ENCODE measurements at regions of chr14 and their contacts with region 1.

Region 1: DNA sequence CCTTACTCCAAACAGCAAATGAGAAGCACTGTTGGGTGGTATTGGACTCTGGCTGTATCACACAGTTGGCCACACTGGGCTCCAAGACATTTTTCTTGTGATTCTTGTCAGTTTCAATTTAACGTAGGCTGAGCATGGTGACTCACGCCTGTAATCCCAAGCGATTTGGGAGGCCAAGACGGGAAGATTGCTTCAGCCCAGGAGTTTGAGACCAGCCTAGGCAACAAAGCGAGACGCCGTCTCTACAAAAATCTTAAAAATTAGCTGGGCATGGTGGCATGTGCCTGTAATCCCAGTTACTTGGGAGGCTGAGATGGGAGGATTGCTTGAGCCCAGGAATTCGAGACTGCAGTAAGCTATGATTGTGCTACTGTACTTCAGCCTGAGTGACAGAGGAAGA is 35.3 kb upstream of the PLEKHD1 start:
- DNase-seq: no peak
- H3K4me3 ChIP-seq: no peak overlapping the region
- H3K27ac ChIP-seq: no peak overlapping the region
- H3K4me1 ChIP-seq: no peaks in the 10 kb centered on the region
- H3K27me3 ChIP-seq: no peaks in the 10 kb centered on the region
- CTCF ChIP-seq: no peak

Region 2: DNA sequence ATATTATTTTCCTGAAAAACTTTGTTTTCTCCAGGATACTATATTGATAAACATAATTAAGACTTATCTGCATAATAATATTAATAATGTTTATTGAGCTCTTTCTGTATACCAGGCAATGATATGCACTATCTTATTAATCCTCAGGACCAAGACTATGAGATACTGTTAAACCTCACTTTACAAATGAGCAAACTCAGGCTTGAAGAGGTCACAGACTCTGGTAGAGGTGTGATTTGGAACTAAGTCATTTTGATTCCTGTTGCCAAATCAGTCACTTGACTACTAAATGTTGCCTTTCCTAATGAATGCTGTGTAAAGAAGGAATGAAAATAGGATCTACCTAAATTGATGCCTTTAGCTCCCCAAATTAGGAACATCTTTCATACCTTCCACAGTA is 43.5 kb before region 1 on chr14:
- CTCF ChIA-PET with region 1: interaction called, 10 read pairs
- POLR2A ChIA-PET with region 1: no interaction called
- intact Hi-C with region 1: no loop called
- DNase-seq: no peak
- H3K4me3 ChIP-seq: no peak overlapping the region
- H3K27ac ChIP-seq: no peak overlapping the region
- H3K4me1 ChIP-seq: peaks cover 18% of the 10 kb centered on the region
- H3K27me3 ChIP-seq: no peaks in the 10 kb centered on the region
- CTCF ChIP-seq: no peak

Measured in PC-9 (cell line).